Activated CD4-positive, alpha-beta memory T cell treated with anti-CD3 and anti-CD28 coated beads for 36 hours (primary cell): ENCODE measurements at regions of chr10 and their contacts with region 1.

Region 1: GRCh38 chr10:31745612-31746376 is 182.8 kb downstream of the ARHGAP12 start:
- DNase-seq: peak; percentile 76
- H3K4me3 Mint-ChIP-seq: peak overlapping the region; percentile 38
- H3K27ac Mint-ChIP-seq: peak overlapping the region; percentile 95
- H3K4me1 Mint-ChIP-seq: peaks cover 38% of the 10 kb centered on the region
- H3K27me3 Mint-ChIP-seq: no peaks in the 10 kb centered on the region

Region 2: DNA sequence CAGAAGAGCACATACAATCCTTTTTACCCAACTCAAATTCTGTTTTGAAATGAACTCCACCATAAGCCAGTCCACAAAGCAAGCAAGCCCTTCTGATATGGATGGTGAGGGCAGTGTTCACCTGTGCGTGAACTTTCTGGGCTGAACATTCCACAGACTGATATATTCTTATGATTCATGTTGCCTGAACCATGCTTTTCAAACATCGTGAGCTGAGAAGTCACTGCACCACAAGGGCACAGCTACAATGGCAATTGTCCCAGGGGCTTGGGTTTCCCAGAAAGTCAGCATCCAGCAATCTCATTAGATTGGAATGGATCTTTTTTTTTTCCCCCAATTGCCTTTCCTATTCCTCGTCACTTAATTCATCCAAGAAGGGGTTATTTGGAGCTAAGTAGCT is 627.2 kb before region 1 on chr10:
- CTCF ChIA-PET with region 1: no interaction called
- POLR2A ChIA-PET with region 1: no interaction called
- intact Hi-C with region 1: no loop called
- DNase-seq: no peak
- H3K4me3 Mint-ChIP-seq: no peak overlapping the region
- H3K27ac Mint-ChIP-seq: no peak overlapping the region
- H3K4me1 Mint-ChIP-seq: peaks cover 16% of the 10 kb centered on the region
- H3K27me3 Mint-ChIP-seq: peaks cover 1% of the 10 kb centered on the region

Region 3: GRCh38 chr10:31603235-31604087 is 142.3 kb before region 1 on chr10:
- CTCF ChIA-PET with region 1: no interaction called
- POLR2A ChIA-PET with region 1: no interaction called
- intact Hi-C with region 1: loop called (anchors 1 kb)
- DNase-seq: peak; percentile 93
- H3K4me3 Mint-ChIP-seq: peak overlapping the region; percentile 77
- H3K27ac Mint-ChIP-seq: no peak overlapping the region
- H3K4me1 Mint-ChIP-seq: peaks cover 25% of the 10 kb centered on the region
- H3K27me3 Mint-ChIP-seq: peaks cover 1% of the 10 kb centered on the region

Region 4: DNA sequence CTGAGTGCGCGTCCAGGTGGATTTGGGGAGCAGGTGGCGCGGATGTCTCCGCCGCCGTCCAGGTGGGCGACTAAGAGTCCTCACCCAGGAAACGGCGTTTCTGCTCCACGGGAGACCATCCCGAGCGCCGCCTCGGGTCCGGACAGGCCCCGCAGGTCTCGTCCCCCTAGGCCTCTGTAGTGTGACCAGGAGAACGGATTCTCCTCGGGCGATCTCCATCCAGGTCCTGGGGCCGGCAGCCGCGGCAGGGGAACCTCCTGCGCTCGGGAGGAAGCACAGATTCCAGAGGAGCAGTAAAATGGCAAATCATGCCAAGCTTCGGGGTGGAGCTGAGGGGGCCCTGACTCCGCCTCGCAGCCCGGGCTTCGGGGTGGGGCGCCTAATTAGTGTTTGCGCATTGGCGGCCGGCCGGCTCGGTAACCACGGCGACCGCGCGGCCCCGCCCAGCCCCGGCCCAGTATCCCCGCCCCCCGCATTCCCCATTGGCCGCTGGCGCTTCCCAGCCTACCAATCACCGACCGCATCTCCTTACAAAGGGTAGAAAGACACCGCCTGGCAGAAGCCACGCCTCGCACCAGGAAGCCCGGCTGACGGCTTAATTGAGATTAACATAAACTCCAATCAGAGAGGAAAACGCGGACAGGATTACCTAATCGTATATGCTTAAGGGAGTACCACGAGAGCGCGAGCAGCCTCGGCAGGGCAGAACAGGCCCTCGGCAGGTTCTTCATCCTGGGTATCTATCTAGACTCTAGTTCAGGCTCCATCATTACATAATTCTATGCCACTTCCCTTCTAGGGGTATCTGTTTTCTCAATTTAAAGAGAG is 14.2 kb after region 1 on chr10:
- CTCF ChIA-PET with region 1: no interaction called
- POLR2A ChIA-PET with region 1: interaction called, 19 read pairs
- intact Hi-C with region 1: loop called (anchors 1 kb)
- DNase-seq: peak; percentile 97
- H3K4me3 Mint-ChIP-seq: peak overlapping the region; percentile 96
- H3K27ac Mint-ChIP-seq: peak overlapping the region; percentile 91
- H3K4me1 Mint-ChIP-seq: peaks cover 10% of the 10 kb centered on the region
- H3K27me3 Mint-ChIP-seq: no peaks in the 10 kb centered on the region

Region 5: DNA sequence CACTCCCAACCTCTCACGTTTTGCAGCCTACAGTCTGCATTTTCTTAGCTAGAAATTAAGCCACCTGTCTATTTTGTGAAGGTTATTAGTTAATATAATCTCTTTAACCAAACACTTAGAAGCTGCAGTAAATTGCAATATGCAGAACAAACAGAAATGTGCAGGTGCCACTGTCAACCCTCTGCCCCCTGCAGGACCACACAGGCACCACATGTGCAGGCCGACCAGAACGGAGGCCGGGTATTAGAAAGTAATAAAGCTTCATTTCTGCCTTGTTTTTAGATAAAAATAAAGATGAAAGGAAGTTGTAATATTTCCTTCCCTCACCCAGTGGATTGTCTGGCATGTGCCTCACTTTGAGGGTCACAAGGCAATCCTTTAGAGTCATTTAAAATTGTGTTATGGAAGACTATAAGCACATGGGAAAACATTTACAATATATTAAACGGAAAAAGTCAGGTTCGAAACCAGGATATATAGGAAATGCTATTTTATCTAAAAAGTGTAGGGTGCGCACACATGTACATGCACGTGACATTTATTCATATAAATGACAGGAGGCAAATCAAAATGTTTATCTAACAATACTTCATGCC is 24.6 kb after region 1 on chr10:
- CTCF ChIA-PET with region 1: interaction called, 10 read pairs
- POLR2A ChIA-PET with region 1: interaction called, 4 read pairs
- intact Hi-C with region 1: no loop called
- DNase-seq: peak; percentile 69
- H3K4me3 Mint-ChIP-seq: no peak overlapping the region
- H3K27ac Mint-ChIP-seq: no peak overlapping the region
- H3K4me1 Mint-ChIP-seq: no peaks in the 10 kb centered on the region
- H3K27me3 Mint-ChIP-seq: no peaks in the 10 kb centered on the region

Region 6: DNA sequence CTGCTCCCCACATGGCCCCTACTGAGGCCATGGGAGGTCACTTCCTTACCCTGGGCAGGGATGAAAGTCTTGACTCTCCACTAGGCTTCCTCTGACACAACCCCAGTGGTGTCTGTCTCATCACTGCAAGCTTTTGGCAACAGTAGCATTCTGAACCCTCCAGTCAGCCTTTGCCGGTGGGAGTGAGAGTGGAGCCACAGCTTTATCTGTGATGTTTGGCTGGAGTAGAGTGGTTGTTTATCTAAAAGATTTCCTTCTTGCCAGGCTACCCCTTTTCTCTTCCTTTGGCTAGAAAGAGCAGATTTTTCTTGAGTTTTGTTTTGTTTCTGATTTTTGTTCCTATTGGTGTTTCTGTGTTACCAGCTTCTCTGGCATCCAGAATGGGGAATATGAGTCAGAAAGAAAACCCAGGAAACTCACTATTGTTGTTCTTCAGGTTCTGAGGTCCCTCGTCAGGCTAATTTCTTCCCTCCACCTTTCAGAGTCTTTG is 409.3 kb after region 1 on chr10:
- CTCF ChIA-PET with region 1: no interaction called
- POLR2A ChIA-PET with region 1: no interaction called
- intact Hi-C with region 1: no loop called
- DNase-seq: no peak
- H3K4me3 Mint-ChIP-seq: no peak overlapping the region
- H3K27ac Mint-ChIP-seq: no peak overlapping the region
- H3K4me1 Mint-ChIP-seq: peaks cover 17% of the 10 kb centered on the region
- H3K27me3 Mint-ChIP-seq: no peaks in the 10 kb centered on the region